Esophagus muscularis mucosa (tissue), 4 donors: ENCODE measurements at regions of chr14 and their contacts with region 1.

Region 1: DNA sequence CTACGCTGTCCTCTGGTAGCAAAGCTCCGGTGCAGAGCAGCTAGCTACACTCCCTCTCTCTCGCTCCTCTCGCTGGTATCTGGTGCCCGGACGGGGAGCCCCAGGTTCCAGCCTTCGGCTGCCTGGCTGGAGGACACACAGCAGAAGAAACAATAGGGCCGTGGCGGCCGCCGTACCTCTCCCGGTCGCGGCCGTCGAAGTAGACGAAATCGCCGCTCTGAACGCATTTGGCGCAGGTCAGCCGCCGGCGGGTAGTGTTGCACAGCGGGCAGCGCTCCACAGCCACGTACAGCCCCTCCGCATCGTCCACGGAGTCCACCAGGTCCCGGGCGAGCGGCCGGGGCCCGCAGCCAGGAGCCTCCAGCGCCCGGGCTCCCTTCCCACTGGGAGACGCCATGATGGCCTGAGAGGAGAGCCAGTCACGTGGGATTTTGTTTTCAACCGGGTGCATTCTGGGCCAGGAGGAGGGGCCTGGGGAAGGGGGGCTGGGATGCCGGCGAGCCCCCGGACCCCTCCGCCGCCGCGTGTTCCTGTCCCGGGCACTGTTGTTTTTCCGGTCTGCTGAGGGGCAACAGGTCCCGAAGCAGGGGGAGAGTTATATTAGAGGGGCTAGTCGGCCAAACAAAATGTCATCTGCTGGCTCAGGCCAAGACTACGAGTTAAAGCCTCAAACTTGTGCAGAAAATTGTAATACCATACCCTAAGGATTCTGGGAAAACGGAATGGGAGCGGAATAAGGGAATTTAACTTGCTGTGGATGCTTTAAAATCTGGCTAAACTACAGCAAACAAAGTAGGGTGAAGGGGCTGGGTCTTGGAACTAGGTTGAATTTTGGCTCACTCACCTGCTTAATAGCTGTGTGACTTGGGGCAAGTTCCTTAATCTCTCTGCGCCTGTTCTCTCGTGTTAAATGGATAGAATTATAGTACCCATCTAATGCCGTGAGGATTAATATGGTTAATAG is at the start of gene ATG14:
- DNase-seq: peak; percentile 95
- H3K4me3 ChIP-seq: peak within 1 kb of the TSS; percentile 82 to 99 (median 96)
- H3K27ac ChIP-seq: peak within 1 kb of the TSS; percentile 85 to 94 (median 86)
- H3K4me1 ChIP-seq: peaks cover 20 to 31% (median 25%) of the 10 kb centered on the region in 4 donors
- H3K27me3 ChIP-seq: no peaks in the 10 kb centered on the region
- CTCF ChIP-seq: no peak
- EP300 ChIP-seq: no peak
- POLR2A ChIP-seq: no peak
- total RNA-seq, gene ATG14: 13.2 to 19.5 (median 15.4) TPM

Region 2: DNA sequence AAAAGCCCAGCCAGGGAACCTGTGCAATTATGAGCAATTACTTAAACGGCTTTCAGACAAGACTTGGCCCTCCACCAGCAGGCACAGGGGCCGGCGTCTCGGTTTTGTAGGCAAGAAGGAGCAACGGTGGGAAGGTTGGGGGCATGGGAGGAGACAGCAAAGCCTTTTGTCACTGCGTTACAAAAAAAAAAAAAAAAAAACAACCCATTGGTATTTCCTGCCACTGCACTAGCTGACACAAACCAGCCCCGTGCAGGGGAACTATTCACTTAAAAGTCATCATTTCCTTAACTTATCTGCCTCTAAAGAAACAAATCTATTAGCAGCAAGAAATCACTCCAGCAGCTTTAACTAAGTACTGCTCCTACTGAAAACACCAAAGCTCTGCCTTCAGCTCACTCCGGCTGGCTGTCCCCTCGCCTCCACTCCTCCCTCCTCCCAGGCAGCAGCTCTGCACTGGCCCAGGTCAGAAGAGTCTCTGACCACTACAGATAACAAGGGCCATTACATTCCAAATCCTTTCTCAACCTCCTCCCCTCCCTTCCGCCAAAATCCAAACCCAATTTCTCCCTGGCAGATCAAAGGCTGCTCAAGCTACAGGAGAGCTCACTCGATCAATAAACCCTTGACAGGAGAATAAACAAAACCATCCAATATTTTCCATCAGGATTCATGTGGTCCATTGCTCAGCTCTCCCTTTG is 1120.1 kb before region 1 on chr14:
- intact Hi-C with region 1: no loop called
- DNase-seq: no peak
- H3K4me3 ChIP-seq: no peak overlapping the region
- H3K27ac ChIP-seq: no peak overlapping the region
- H3K4me1 ChIP-seq: peaks cover 0 to 7% (median 0%) of the 10 kb centered on the region in 4 donors
- H3K27me3 ChIP-seq: no peaks in the 10 kb centered on the region
- CTCF ChIP-seq: no peak
- EP300 ChIP-seq: no peak
- POLR2A ChIP-seq: no peak

Region 3: GRCh38 chr14:55270832-55271565 is 140.7 kb before region 1 on chr14 and contains the start of gene FBXO34:
- intact Hi-C with region 1: loop called (anchors 5 kb)
- DNase-seq: peak; percentile 100
- H3K4me3 ChIP-seq: peak within 1 kb of the TSS; percentile 76 to 99 (median 96)
- H3K27ac ChIP-seq: peak within 1 kb of the TSS; percentile 88 to 93 (median 90)
- H3K4me1 ChIP-seq: peaks cover 27 to 49% (median 46%) of the 10 kb centered on the region in 4 donors
- H3K27me3 ChIP-seq: no peaks in the 10 kb centered on the region
- CTCF ChIP-seq: peak; percentile 96 to 99 (median 99)
- EP300 ChIP-seq: no peak
- POLR2A ChIP-seq: peak; percentile 69
- total RNA-seq, gene FBXO34: 16.2 to 22.0 (median 20.4) TPM

Region 4: DNA sequence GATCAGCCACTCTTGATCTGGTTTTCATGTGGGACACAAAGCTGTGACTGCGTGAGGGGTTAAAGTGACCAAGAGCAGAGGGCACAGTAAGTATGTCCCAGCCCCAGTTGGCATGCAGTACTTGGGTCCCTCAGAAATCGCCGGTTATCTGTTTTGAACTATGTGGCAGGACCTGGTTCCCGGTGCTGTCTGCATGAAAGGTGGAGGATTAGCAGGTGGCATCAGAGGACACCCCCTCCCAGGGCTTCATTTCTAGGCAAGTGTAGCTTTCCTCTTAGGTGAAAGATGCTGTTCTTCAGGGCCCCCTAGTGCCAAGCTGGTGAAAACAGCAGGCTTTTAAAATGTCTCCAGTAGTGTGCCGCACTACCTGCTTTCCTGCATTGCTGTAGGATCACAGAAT is 57.2 kb before region 1 on chr14:
- intact Hi-C with region 1: no loop called
- DNase-seq: peak; percentile 87
- H3K4me3 ChIP-seq: no peak overlapping the region
- H3K27ac ChIP-seq: no peak overlapping the region
- H3K4me1 ChIP-seq: peaks cover 0 to 7% (median 3%) of the 10 kb centered on the region in 4 donors
- H3K27me3 ChIP-seq: no peaks in the 10 kb centered on the region
- CTCF ChIP-seq: peak; percentile 27 to 67 (median 32)
- EP300 ChIP-seq: no peak
- POLR2A ChIP-seq: no peak